ENCODE measurements at regions of chr9 and their contacts with region 1.

Region 1: DNA sequence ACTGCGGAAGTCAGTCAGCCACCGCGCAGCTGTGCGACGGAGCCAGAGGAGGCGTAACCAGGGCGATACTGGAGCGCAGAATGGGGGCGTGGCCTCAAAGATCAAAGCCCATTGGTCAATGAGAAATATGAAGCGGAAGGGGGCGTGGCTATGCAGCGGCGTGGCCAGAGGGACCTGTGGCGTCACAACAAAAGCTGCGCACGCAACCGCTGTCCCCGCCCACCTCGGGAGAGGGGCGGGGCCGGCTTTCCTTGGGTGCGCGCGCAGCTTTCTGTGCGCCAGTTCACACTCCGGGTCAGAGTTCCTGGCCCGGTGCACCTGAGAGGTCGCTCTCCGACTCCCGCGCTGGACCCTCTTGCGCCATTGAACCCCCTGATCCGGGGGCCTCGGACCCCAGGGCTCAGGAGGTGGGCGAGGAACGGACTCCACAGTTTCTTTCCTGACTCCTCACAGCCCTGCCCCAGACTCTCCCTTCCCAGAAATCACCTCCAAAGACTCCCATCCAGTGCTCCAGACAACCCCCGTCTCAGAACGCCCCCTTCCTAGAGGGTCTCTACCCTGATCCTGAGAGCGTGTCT is at the starts of genes GOLGA2 and SWI5:
- DNase-seq: peak; percentile 98 to 100 (median 100)
- ATAC-seq: peak; percentile 96 to 98
- H3K4me3 Mint-ChIP-seq: peak within 1 kb of the TSS; percentile 94 to 97 (median 96)
- H3K27ac Mint-ChIP-seq: peak within 1 kb of the TSS; percentile 94 to 100 (median 98)
- H3K4me1 Mint-ChIP-seq: peaks cover 22 to 49% (median 46%) of the 10 kb centered on the region in 4 donors
- H3K27me3 Mint-ChIP-seq: peaks cover 0 to 2% (median 0%) of the 10 kb centered on the region in 5 donors
- polyA plus RNA-seq, gene GOLGA2: 4.7 to 7.4 (median 6.2) TPM
- polyA plus RNA-seq, gene SWI5: 33.5 to 46.8 (median 34.3) TPM

Region 2: DNA sequence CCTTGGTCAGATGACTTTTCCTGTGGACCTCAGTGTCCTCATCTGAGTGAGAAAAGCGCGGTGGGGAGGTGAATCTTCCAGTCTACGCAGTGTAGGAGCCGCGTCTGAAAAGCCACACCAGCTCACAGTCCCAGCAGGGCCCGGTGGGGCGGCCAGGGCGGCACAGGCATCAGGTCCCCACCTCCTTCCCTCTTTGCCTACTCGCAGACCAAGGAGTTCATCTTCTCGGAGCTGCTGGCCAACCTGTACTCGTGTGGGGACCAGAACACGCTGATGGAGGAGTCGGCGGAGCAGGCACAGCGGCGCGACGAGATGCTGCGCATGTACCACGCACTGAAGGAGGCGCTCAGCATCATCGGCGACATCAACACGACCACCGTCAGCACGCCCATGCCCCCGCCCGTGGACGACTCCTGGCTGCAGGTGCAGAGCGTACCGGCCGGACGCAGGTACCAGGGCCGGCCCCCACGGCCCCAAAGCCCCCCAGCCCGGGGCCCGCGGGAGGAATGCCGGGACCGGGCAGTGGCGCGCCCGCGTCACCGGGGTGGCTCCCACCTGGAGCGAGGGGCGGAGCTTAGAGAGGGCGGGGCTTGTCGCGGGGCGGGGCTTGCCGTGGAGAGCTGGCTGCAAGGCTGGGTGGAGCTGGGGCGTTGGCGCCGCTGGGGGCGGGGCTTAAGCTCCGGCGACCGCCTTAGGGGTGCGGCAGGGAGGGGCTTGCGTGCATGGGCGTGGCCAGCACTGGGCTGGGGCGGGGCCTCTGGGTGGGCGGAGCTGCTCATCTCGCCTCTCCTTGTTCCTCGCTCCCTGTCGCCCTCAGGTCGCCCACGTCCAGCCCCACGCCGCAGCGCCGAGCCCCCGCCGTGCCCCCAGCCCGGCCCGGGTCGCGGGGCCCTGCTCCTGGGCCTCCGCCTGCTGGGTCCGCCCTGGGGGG is 25.9 kb before region 1 on chr9:
- POLR2A ChIA-PET with region 1: interaction called, 14 read pairs
- DNase-seq: peak; percentile 94 to 100 (median 99)
- ATAC-seq: peak; percentile 88 to 89
- H3K4me3 Mint-ChIP-seq: peak overlapping the region; percentile 81 to 94 (median 88)
- H3K27ac Mint-ChIP-seq: peak overlapping the region; percentile 77 to 99 (median 97)
- H3K4me1 Mint-ChIP-seq: peaks cover 16 to 34% (median 23%) of the 10 kb centered on the region in 4 donors
- H3K27me3 Mint-ChIP-seq: peaks cover 0 to 8% (median 4%) of the 10 kb centered on the region in 5 donors

Measured in naive thymus-derived CD8-positive, alpha-beta T cell (primary cell).